ENCODE measurements at regions of chr10 and their contacts with region 1.

Region 1: GRCh38 chr10:36779234-36779846 is 346.1 kb upstream of the ANKRD30A start:
- DNase-seq: no peak
- H3K4me3 ChIP-seq: no peak overlapping the region
- H3K27ac ChIP-seq: peak overlapping the region; percentile 51
- H3K4me1 ChIP-seq: peaks cover 13% of the 10 kb centered on the region
- H3K27me3 ChIP-seq: peaks cover 3% of the 10 kb centered on the region
- CTCF ChIP-seq: peak; percentile 86

Region 2: GRCh38 chr10:35635576-35635975 is 1143.8 kb before region 1 on chr10:
- intact Hi-C with region 1: loop called (anchors 5 kb)
- DNase-seq: no peak
- H3K4me3 ChIP-seq: no peak overlapping the region
- H3K27ac ChIP-seq: no peak overlapping the region
- H3K4me1 ChIP-seq: peaks cover 41% of the 10 kb centered on the region
- H3K27me3 ChIP-seq: no peaks in the 10 kb centered on the region
- CTCF ChIP-seq: peak; percentile 95